Activated CD4-positive, alpha-beta memory T cell treated with anti-CD3 and anti-CD28 coated beads for 36 hours (primary cell): ENCODE measurements at regions of chr1 and their contacts with region 1.

Region 1: DNA sequence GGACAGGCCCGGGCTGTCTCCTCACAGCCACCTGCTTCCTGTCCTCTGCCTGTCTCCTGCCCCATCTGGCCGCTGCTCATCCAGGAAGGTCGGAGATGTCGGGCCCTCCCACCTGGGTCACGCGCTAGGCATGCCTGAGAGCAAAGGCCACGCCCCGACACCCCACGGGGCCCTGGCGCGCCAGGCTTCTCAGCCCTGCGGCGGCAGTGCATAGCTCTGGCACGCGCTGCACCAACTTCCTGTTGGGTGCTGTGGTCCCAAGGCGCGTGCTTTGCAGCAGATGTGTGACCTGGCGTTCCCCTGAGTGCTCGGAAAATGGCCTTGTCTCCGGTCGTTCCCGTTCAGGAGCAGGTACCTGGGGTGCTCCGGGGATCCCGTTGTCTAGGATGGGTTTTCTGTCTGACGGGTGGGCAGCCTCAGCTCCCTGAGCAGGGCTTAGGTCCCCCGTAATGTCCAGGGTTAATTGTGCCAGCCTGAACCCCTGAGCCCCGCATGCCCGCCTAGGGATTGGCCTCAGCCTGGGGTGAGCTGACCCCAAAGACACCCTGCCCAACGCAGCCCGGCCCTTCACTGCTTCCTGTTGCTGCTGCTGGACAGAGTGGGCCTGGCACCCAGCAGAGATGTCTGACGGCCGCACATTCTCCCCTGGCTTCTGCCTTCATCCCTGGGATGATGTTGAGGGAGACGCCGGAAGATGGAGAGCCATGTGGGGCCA is 19.4 kb upstream of the KCNAB2 start:
- DNase-seq: peak; percentile 97
- H3K4me3 Mint-ChIP-seq: peak overlapping the region; percentile 96
- H3K27ac Mint-ChIP-seq: peak overlapping the region; percentile 97
- H3K4me1 Mint-ChIP-seq: peaks cover 43% of the 10 kb centered on the region
- H3K27me3 Mint-ChIP-seq: no peaks in the 10 kb centered on the region

Region 2: GRCh38 chr1:5915587-5916571 is 110.4 kb before region 1 on chr1:
- CTCF ChIA-PET with region 1: interaction called, 4 read pairs
- POLR2A ChIA-PET with region 1: no interaction called
- intact Hi-C with region 1: loop called (anchors 2 kb)
- DNase-seq: peak; percentile 53
- H3K4me3 Mint-ChIP-seq: no peak overlapping the region
- H3K27ac Mint-ChIP-seq: no peak overlapping the region
- H3K4me1 Mint-ChIP-seq: peaks cover 11% of the 10 kb centered on the region
- H3K27me3 Mint-ChIP-seq: no peaks in the 10 kb centered on the region

Region 3: GRCh38 chr1:5992026-5992813 is 34.0 kb before region 1 on chr1 and contains the start of gene NPHP4:
- CTCF ChIA-PET with region 1: interaction called, 7 read pairs
- POLR2A ChIA-PET with region 1: interaction called, 41 read pairs
- intact Hi-C with region 1: loop called (anchors 1 kb)
- DNase-seq: peak; percentile 100
- H3K4me3 Mint-ChIP-seq: peak within 1 kb of the TSS; percentile 86
- H3K27ac Mint-ChIP-seq: peak within 1 kb of the TSS; percentile 88
- H3K4me1 Mint-ChIP-seq: peaks cover 21% of the 10 kb centered on the region
- H3K27me3 Mint-ChIP-seq: no peaks in the 10 kb centered on the region
- total RNA-seq, gene NPHP4: 14.0 to 14.6 TPM